ENCODE measurements at regions of chr1 and their contacts with region 1.

Region 1: GRCh38 chr1:66242646-66243547 is 291.1 kb upstream of the SGIP1 start:
- DNase-seq: peak; percentile 41
- CTCF ChIP-seq: peak; percentile 100

Region 2: DNA sequence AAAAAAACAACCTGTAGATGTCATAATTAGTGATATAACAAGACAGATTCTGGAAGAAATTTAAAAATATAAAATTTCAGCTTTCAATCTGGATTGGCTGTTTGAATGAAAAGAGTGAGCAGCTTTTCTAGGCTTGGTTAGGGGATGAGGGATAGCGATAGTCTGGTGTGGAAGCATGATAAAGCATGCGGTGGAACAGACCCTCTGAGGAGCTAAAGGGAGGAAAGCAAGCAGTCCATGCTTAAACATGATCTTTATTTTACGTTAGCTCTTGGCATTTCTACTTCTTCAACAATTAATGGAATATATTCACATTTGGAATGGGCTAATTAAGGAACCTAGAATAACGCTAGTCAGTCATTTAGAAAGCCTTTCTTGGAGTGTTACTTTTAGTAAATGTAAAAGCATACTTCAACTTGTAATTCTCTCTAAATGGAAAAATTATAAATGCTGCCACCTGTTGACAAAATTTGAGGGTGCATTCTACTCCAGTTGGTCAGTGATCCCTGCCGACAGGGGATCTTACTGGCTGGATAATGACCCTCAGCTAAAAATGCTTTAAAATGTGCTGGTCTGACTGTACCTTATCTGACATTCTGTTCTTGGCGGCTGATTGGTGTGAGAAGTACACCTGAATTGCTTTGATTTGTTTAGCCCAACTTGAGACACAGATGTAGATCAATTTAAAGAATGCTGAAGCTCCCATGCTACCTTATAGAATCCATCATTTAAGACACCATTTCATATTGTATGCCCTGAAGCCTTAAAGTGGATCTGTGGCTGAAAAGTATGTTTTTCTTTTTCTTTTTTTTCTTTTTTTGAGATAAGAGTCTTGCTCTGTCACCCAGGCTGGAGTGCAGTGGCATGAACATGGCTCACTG is 1033.7 kb before region 1 on chr1:
- in situ Hi-C with region 1: loop called (anchors 25 kb)
- DNase-seq: peak; percentile 45
- CTCF ChIP-seq: peak; percentile 54

Region 3: GRCh38 chr1:65717815-65718454 is 525.0 kb before region 1 on chr1:
- in situ Hi-C with region 1: loop called (anchors 25 kb)
- DNase-seq: no peak
- CTCF ChIP-seq: no peak

Region 4: GRCh38 chr1:65958561-65959350 is 284.1 kb before region 1 on chr1:
- in situ Hi-C with region 1: loop called (anchors 10 kb)
- DNase-seq: peak; percentile 9
- CTCF ChIP-seq: peak; percentile 66